Vagina (tissue), 2 donors: ENCODE measurements at regions of chr13 and their contacts with region 1.

Region 1: DNA sequence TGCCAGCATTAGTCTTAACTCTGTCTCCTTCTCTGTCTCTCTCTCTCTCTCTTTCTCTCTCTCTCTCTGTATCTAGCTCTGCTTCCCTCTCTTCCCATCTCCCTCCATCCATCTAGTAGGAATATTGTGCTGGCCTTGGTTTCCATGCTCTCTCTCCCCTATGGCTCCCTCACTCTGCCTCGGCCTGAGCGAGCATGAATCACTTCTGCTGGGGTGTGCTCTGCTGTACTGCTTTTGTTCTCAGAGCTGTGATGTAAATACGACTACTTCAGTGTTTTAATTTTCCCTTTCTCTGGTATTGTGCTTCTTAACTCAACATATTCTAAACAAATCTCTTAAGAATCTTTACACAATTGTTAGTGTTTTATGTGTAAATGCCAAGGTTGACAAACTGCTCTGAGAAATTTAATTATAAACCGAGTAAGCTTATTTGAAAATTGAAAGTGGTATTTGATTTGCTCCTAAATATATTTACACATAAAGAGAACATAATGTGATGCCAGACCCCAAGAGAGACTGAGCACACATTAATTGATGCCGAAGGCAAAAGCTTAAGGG is 211.5 kb upstream of the KL start:
- DNase-seq: no peak
- H3K4me3 ChIP-seq: no peak overlapping the region
- H3K27ac ChIP-seq: no peak overlapping the region
- H3K4me1 ChIP-seq: no peaks in the 10 kb centered on the region
- H3K27me3 ChIP-seq: no peaks in the 10 kb centered on the region
- CTCF ChIP-seq: no peak
- POLR2A ChIP-seq: no peak

Region 2: DNA sequence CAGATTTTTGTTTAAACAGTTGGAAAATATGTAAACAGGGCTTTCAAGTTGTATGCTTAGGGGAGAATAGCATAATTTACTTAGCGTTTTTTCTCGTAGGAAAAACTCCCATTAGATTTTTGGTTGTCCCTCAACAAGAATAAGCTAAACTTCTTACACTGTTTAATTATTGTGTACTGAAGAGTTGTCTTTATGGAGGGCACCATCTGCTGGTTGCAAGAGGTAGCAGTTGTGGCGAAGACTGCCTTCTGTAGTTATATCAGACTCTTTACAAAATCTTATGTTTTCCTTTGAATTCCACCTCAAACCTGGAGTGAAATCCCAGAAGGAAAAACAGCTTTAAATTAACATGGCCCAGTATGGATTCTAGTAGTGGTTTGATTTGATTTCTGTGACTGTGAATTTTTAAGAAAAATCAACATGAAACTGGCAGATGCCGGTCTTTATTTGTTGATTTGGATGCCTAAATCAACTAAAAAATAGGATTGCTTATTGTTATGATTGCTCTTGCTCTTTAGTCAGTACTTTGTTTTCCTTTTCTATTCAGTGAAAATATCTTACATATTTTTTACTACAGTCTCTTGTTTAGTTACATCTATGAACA is 165.1 kb before region 1 on chr13:
- intact Hi-C with region 1: no loop called
- DNase-seq: no peak
- H3K4me3 ChIP-seq: no peak overlapping the region
- H3K27ac ChIP-seq: no peak overlapping the region
- H3K4me1 ChIP-seq: peaks cover 55% of the 10 kb centered on the region
- H3K27me3 ChIP-seq: no peaks in the 10 kb centered on the region
- CTCF ChIP-seq: peak in 2 of 3 experiments; percentile 59 to 74
- POLR2A ChIP-seq: no peak

Region 3: DNA sequence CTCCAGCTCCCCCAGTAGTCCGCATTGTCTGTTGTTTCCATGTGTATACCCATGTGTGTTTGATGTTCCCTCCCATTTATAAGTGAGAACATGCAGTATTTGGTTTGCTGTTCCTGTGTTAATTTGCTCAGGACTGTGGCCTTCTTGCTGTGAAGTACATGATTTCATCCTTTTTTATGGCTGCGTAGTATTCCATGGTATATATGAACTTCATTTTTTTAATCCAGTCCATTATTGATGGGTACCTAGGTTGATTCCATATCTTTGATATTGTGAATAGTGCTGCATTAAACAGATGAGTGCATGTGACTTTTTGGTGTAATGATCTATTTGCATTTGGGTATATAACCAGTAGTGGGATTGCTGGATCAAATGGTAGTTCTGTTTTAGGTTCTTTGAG is 43.3 kb before region 1 on chr13:
- intact Hi-C with region 1: no loop called
- DNase-seq: no peak
- H3K4me3 ChIP-seq: no peak overlapping the region
- H3K27ac ChIP-seq: no peak overlapping the region
- H3K4me1 ChIP-seq: no peaks in the 10 kb centered on the region
- H3K27me3 ChIP-seq: no peaks in the 10 kb centered on the region
- CTCF ChIP-seq: no peak
- POLR2A ChIP-seq: no peak

Region 4: GRCh38 chr13:32821149-32821688 is 16.5 kb after region 1 on chr13:
- intact Hi-C with region 1: no loop called
- DNase-seq: no peak
- H3K4me3 ChIP-seq: no peak overlapping the region
- H3K27ac ChIP-seq: no peak overlapping the region
- H3K4me1 ChIP-seq: no peaks in the 10 kb centered on the region
- H3K27me3 ChIP-seq: no peaks in the 10 kb centered on the region
- CTCF ChIP-seq: no peak
- POLR2A ChIP-seq: no peak

Region 5: DNA sequence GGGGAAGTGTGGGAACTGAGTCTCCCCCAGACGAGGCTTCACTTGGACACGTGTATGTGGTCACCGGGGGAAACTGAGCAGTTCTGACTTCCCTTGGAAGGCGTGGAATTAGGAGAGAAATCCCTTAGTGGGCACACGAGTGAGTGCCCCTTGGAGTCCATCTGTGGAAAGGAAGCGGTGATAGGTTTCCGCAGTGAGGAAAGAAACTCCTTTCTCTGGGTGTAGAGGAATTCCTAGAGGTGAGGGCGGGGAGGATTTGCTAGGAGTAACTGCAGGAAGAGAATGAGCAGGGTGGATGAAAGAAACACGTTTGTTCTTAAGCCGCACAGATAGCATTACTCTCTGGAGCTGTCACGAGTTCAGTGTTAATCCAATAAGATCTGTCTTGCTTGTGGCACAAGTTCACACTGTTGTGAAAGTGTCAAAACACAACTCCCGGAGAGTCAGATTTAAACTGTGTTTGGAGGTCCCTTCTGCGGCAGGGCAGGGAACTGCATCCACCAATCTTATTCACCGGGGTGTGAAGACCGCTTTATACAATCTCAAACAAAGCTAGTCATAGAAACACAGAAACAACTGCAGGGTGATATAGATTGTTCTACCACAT is 212.7 kb after region 1 on chr13:
- intact Hi-C with region 1: no loop called
- DNase-seq: no peak
- H3K4me3 ChIP-seq: peak overlapping the region; percentile 52 to 66
- H3K27ac ChIP-seq: peak overlapping the region; percentile 57
- H3K4me1 ChIP-seq: no peaks in the 10 kb centered on the region
- H3K27me3 ChIP-seq: no peaks in the 10 kb centered on the region
- CTCF ChIP-seq: peak in 1 of 3 experiments; percentile 40
- POLR2A ChIP-seq: no peak

Region 6: GRCh38 chr13:34322014-34322742 is 1517.4 kb after region 1 on chr13:
- intact Hi-C with region 1: loop called (anchors 5 kb)
- DNase-seq: no peak
- H3K4me3 ChIP-seq: no peak overlapping the region
- H3K27ac ChIP-seq: no peak overlapping the region
- H3K4me1 ChIP-seq: no peaks in the 10 kb centered on the region
- H3K27me3 ChIP-seq: no peaks in the 10 kb centered on the region
- CTCF ChIP-seq: no peak
- POLR2A ChIP-seq: no peak